ENCODE measurements at regions of chr1 and their contacts with region 1.

Region 1: DNA sequence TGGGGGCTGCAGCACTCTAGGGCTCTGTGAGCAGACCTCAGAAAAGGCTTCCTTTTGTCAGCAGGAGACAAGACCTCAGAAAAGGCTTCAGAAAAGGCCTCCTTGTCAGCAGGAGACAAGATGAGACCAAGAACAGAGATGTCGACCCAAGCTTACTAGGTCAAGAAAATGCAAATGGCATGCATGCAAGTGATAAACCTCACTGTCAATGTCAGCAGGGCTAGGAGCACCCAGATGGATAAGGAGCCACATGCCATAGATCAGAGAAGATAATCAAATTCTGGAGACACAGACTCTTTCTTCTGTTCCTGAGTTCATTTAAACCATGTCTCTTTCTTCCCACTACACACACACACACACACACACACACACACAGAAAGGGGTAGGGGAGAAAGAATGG is 285.9 kb downstream of the CHRM3 start:
- DNase-seq: no peak
- ATAC-seq: no peak
- H3K4me3 ChIP-seq: no peak overlapping the region
- H3K4me3 Mint-ChIP-seq: no peak overlapping the region
- H3K27ac ChIP-seq: no peak overlapping the region
- H3K27ac Mint-ChIP-seq: no peak overlapping the region
- H3K4me1 ChIP-seq: no peaks in the 10 kb centered on the region
- H3K4me1 Mint-ChIP-seq: no peaks in the 10 kb centered on the region
- H3K27me3 ChIP-seq: no peaks in the 10 kb centered on the region
- H3K27me3 Mint-ChIP-seq: peaks cover 0 to 3% of the 10 kb centered on the region in 2 donors

Region 2: DNA sequence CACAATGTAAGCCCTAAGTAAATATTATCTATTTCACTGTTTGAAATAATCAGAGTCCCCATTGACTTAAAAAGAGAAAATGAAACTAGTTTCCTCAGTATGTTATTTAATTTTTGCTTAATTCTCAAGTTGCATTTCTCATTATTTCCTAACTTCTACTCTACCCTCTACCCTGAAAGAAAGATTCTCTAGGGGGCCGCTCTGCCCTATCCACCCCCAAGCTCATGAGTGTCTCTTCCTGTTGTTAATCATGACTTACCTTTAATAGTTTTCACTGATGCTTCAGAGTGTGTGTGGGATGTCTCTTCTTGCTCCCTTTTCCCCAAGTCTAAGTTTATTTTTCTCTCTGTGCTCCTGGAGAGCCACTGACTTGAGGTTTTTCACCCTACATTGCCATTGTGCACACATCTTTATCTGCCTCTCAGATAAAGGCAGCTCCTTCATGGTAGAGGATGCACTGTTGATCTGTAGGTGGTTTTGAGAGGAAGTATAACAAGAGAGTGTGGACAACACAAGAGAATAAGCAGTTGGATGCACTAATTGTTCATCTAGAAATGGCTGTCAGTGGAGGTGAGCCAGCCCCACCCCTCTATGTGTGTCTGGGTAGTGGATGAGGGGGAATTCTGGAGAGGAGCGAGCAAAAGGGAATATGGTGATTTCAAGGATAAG is 24.2 kb before region 1 on chr1:
- CTCF ChIA-PET with region 1: no interaction called
- POLR2A ChIA-PET with region 1: no interaction called
- DNase-seq: no peak
- ATAC-seq: no peak
- H3K4me3 ChIP-seq: no peak overlapping the region
- H3K4me3 Mint-ChIP-seq: no peak overlapping the region
- H3K27ac ChIP-seq: no peak overlapping the region
- H3K27ac Mint-ChIP-seq: no peak overlapping the region
- H3K4me1 ChIP-seq: peaks cover 6% of the 10 kb centered on the region in 2 experiments
- H3K4me1 Mint-ChIP-seq: no peaks in the 10 kb centered on the region
- H3K27me3 ChIP-seq: peaks cover 0 to 5% of the 10 kb centered on the region in 2 experiments
- H3K27me3 Mint-ChIP-seq: no peaks in the 10 kb centered on the region

Region 3: DNA sequence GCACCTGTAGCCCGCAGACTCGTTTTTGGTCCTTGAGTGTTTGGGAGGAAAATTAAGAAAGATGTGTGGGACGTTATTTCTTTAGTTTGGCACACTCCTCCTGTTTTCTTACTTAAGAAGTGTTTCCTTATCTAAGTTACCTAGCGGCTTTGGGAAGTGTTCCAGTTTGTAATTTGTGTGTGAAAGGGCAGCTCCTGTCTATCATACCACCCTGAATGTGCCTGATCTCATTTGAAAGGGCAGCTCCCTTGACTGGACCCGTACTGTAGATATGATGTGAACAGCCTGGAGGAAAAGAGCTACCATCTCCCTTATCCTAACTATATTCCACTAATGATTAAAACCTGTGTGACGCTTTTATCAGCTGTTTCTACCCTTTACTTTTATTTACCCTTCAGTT is 28.4 kb after region 1 on chr1:
- CTCF ChIA-PET with region 1: interaction called in 1 of 2 experiments, 10 read pairs
- POLR2A ChIA-PET with region 1: interaction called in 1 of 2 experiments, 3 read pairs
- DNase-seq: no peak
- ATAC-seq: no peak
- H3K4me3 ChIP-seq: no peak overlapping the region
- H3K4me3 Mint-ChIP-seq: no peak overlapping the region
- H3K27ac ChIP-seq: no peak overlapping the region
- H3K27ac Mint-ChIP-seq: no peak overlapping the region
- H3K4me1 ChIP-seq: peaks cover 0 to 2% of the 10 kb centered on the region in 2 experiments
- H3K4me1 Mint-ChIP-seq: peaks cover 12 to 37% (median 13%) of the 10 kb centered on the region in 3 donors
- H3K27me3 ChIP-seq: no peaks in the 10 kb centered on the region
- H3K27me3 Mint-ChIP-seq: no peaks in the 10 kb centered on the region

Region 4: GRCh38 chr1:239742416-239743109 is 70.3 kb after region 1 on chr1:
- CTCF ChIA-PET with region 1: no interaction called
- POLR2A ChIA-PET with region 1: no interaction called
- DNase-seq: no peak
- ATAC-seq: no peak
- H3K4me3 ChIP-seq: no peak overlapping the region
- H3K4me3 Mint-ChIP-seq: no peak overlapping the region
- H3K27ac ChIP-seq: no peak overlapping the region
- H3K27ac Mint-ChIP-seq: no peak overlapping the region
- H3K4me1 ChIP-seq: peaks cover 0 to 2% of the 10 kb centered on the region in 2 experiments
- H3K4me1 Mint-ChIP-seq: peaks cover 17 to 20% (median 18%) of the 10 kb centered on the region in 3 donors
- H3K27me3 ChIP-seq: no peaks in the 10 kb centered on the region
- H3K27me3 Mint-ChIP-seq: no peaks in the 10 kb centered on the region